ENCODE measurements at regions of chrX and their contacts with region 1.

Region 1: DNA sequence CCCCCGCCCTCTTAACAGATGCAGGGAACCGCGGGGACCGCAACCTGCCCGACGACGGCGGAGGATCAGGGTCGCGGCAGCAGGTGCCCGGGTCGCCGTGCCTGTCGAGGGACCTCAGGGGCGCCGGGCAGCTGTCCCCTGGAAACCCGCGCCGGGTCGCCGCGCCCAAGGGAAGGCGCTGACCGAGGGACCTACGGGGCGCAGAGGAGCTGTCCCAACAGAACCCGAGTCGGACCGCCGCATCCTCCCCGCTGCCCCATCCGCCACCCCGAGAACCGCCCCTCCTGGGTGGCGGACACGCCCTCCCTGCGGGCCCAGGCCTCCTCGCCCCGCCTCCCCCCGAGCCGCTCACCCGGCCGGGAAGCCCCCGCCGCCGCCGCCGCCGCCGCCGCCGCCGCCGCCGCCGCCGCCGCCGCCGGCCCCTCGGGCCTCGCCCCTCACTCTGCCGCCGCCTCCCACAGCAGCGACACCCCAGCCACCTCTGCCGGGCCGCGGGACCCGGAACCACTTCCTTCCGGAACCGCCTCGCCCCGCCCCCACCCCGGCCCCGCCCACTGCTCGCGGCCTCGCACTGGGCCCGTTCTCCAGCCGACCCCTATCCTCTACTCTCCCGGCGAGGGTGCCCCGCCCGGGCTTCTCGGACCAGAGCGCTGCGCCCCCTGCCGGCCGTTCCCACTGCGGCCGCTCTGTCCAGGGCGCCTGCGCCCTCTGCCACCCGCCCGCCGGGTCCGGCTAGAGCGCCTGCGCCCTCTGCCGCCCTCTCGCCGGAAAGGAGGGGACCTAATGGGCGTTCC is at the start of gene BCLAF3:
- DNase-seq: peak; percentile 87
- H3K4me3 Mint-ChIP-seq: peak within 1 kb of the TSS; percentile 87
- H3K27ac Mint-ChIP-seq: peak within 1 kb of the TSS; percentile 90
- H3K4me1 Mint-ChIP-seq: peaks cover 21% of the 10 kb centered on the region
- H3K27me3 Mint-ChIP-seq: no peaks in the 10 kb centered on the region
- total RNA-seq, gene BCLAF3: 3.6 to 4.7 TPM

Region 2: GRCh38 chrX:19372170-19372546 is 618.6 kb before region 1 on chrX:
- CTCF ChIA-PET with region 1: no interaction called
- intact Hi-C with region 1: loop called (anchors 2 kb)
- DNase-seq: peak; percentile 81
- H3K4me3 Mint-ChIP-seq: peak overlapping the region; percentile 66
- H3K27ac Mint-ChIP-seq: no peak overlapping the region
- H3K4me1 Mint-ChIP-seq: peaks cover 5% of the 10 kb centered on the region
- H3K27me3 Mint-ChIP-seq: no peaks in the 10 kb centered on the region

Region 3: GRCh38 chrX:19682712-19683331 is 307.9 kb before region 1 on chrX:
- CTCF ChIA-PET with region 1: no interaction called
- intact Hi-C with region 1: loop called (anchors 2 kb)
- DNase-seq: peak; percentile 88
- H3K4me3 Mint-ChIP-seq: peak overlapping the region; percentile 47
- H3K27ac Mint-ChIP-seq: peak overlapping the region; percentile 90
- H3K4me1 Mint-ChIP-seq: peaks cover 72% of the 10 kb centered on the region
- H3K27me3 Mint-ChIP-seq: no peaks in the 10 kb centered on the region

Region 4: DNA sequence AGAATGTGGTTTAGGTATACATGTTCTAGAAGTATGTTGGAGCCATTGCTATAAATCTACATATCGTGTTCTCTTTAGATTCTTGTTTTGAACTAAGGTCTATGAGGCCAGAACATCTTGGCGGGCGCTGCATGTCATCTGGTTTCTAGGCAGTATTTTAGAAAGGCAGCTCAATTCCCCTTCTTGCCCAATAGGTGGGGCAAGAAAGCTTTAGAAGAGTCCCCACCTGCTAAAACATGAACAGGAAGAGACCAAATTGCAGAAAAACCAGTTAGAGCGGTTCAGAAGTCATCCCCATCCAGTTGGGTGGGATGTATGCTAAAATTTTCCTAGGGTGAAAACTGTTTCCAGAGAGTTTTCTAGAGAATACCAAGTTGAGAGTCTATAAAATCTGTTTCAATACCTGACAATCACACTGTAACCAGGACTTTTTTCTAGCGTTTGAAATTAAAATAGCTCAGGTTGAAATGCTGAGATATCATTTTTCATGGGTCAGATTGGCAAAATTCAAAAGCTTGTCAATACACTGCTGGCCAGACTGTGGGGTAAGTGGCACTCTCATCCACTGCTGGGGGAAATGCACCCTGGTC is 85.9 kb before region 1 on chrX:
- CTCF ChIA-PET with region 1: interaction called, 14 read pairs
- intact Hi-C with region 1: loop called (anchors 1 kb)
- DNase-seq: peak; percentile 30
- H3K4me3 Mint-ChIP-seq: no peak overlapping the region
- H3K27ac Mint-ChIP-seq: no peak overlapping the region
- H3K4me1 Mint-ChIP-seq: peaks cover 9% of the 10 kb centered on the region
- H3K27me3 Mint-ChIP-seq: no peaks in the 10 kb centered on the region

Region 5: DNA sequence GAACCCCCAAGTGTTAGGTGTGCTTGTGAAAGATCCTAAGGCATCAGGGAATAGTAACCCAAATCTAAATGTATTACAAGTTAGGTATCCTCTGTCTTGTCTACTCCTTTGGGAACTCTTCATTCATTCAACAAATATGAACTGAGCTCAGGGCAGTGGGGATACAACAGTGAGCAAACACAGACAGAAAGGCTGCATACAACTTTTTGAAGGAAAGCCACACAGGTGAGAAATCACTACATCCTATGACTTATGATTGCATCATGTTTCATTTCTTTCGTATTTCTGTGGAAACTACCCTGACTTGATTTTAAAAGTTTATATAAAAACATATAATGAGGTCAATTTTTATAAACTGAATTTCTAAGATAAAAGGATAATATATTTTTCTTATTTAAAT is 43.1 kb before region 1 on chrX:
- CTCF ChIA-PET with region 1: interaction called, 3 read pairs
- intact Hi-C with region 1: loop called (anchors 5 kb)
- DNase-seq: peak; percentile 13
- H3K4me3 Mint-ChIP-seq: no peak overlapping the region
- H3K27ac Mint-ChIP-seq: no peak overlapping the region
- H3K4me1 Mint-ChIP-seq: peaks cover 10% of the 10 kb centered on the region
- H3K27me3 Mint-ChIP-seq: no peaks in the 10 kb centered on the region

Region 6: GRCh38 chrX:20066968-20067708 is 76.4 kb after region 1 on chrX:
- CTCF ChIA-PET with region 1: no interaction called
- intact Hi-C with region 1: loop called (anchors 1 kb)
- DNase-seq: peak; percentile 44
- H3K4me3 Mint-ChIP-seq: no peak overlapping the region
- H3K27ac Mint-ChIP-seq: no peak overlapping the region
- H3K4me1 Mint-ChIP-seq: no peaks in the 10 kb centered on the region
- H3K27me3 Mint-ChIP-seq: no peaks in the 10 kb centered on the region

Region 7: DNA sequence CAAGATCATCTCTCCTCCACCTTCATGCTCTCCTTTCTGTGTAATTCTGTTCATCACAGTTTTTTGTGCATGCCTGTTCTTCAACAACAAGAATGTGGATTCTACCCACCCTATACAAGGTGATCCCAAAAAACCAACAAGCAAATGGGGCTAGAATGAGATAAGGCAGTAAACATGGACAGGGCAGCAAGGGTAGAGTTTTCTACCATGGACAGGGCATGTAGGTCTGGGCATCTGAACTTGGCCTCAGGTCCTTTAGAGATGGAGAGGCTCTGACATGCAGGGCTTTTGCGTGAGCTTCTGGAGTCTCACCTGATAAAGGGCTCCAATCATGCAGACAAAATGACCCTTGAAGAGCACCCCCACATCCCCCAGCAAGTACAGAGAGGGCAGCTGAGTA is 89.5 kb after region 1 on chrX:
- CTCF ChIA-PET with region 1: no interaction called
- intact Hi-C with region 1: no loop called
- DNase-seq: no peak
- H3K4me3 Mint-ChIP-seq: no peak overlapping the region
- H3K27ac Mint-ChIP-seq: no peak overlapping the region
- H3K4me1 Mint-ChIP-seq: no peaks in the 10 kb centered on the region
- H3K27me3 Mint-ChIP-seq: no peaks in the 10 kb centered on the region

Region 8: GRCh38 chrX:20442597-20442996 is 451.8 kb after region 1 on chrX:
- CTCF ChIA-PET with region 1: no interaction called
- intact Hi-C with region 1: loop called (anchors 10 kb)
- DNase-seq: peak; percentile 91
- H3K4me3 Mint-ChIP-seq: no peak overlapping the region
- H3K27ac Mint-ChIP-seq: no peak overlapping the region
- H3K4me1 Mint-ChIP-seq: peaks cover 45% of the 10 kb centered on the region
- H3K27me3 Mint-ChIP-seq: no peaks in the 10 kb centered on the region

Measured in activated naive CD4-positive, alpha-beta T cell treated with anti-CD3 and anti-CD28 coated beads for 36 hours (primary cell).